ENCODE measurements at regions of chr19 and their contacts with region 1.

Region 1: DNA sequence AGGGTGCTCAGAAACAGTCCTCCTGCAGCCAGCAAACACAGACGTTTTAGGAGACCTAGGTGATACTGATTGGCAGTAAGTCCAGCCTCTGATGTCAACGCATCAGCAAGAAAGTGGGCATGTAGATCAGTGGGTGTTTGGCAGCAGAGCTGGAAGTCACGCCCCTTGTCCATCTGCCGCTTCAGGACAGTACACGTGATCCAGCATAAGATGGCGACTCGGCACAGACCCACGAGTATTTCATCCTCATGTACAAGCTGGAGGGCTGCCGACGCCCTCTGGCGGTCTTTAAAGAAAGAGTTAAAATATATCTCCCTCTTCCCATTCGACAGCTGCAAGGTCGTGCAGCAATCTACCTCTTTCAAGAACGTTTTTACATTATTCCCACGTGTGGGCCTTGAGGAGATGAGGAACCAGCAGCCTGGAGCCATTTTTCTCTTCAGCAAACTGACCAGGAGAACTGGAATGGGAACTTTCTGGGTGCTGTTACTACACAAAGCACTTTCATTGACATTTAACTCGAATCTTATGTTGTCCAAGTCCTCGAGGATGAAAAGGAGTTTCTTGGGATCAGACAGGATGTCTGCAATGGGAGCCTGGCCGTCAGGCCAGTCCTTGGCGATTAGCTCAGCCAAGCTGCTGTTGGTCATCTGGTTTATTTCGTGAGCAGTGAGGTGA is 22.3 kb downstream of the NLRP11 start:
- DNase-seq: peak; percentile 68 to 81 (median 79)
- ATAC-seq: peak; percentile 97 to 99 (median 98)
- H3K4me3 ChIP-seq: peak overlapping the region in 2 of 3 donors; percentile 17 to 18
- H3K27ac ChIP-seq: no peak overlapping the region
- H3K4me1 ChIP-seq: peaks cover 0 to 8% (median 0%) of the 10 kb centered on the region in 4 donors
- H3K27me3 ChIP-seq: no peaks in the 10 kb centered on the region
- CTCF ChIP-seq: peak; percentile 66 to 73 (median 68)
- POLR2A ChIP-seq: no peak

Region 2: GRCh38 chr19:55638864-55639359 is 170.6 kb before region 1 on chr19:
- intact Hi-C with region 1: loop called in 1 of 2 experiments (anchors 5 kb)
- DNase-seq: no peak
- ATAC-seq: no peak
- H3K4me3 ChIP-seq: no peak overlapping the region
- H3K27ac ChIP-seq: no peak overlapping the region
- H3K4me1 ChIP-seq: peaks cover 0 to 47% (median 20%) of the 10 kb centered on the region in 4 donors
- H3K27me3 ChIP-seq: no peaks in the 10 kb centered on the region
- CTCF ChIP-seq: peak; percentile 10 to 30 (median 18)
- POLR2A ChIP-seq: no peak

Region 3: DNA sequence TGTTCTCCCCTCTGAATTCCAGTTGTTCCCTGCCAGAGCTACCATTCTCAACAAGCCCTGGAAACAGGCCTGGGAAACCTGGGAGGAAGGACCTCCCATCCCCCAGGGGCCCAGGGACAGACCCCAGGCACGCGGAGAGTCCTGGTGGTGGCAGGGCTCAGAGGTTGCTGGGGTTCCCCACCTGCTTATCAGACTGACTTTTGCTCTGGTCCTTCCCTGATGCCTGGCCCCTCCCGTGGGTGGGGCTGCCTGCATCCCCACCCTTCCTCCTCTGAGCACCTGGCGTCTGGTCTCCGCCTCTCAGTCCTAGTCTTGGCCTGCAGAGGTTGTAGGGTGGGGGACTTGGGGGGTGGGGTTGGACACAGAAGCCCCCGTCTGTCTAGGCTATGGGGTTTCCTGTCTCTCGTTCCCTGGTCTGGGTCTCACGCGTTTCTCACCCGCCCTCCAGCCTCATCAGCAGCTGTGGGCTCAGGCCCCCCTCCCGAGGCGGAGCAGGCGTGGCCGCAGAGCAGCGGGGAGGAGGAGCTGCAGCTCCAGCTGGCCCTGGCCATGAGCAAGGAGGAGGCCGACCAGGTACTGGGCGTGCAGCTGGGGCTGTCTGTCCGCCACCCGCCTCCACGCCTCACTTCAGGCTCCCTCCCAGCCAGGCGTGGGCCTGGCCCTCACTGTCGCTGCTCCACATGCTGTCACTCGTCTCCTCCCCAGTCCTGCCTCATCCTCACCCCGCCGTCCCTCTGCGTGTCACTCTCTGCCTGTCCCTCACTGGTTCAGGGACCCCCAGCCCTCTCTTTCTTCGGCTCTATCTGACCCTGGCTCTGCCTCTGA is 120.9 kb before region 1 on chr19:
- intact Hi-C with region 1: loop called in 1 of 2 experiments (anchors 10 kb)
- DNase-seq: peak in 2 of 3 donors; percentile 16 to 18
- ATAC-seq: no peak
- H3K4me3 ChIP-seq: no peak overlapping the region
- H3K27ac ChIP-seq: no peak overlapping the region
- H3K4me1 ChIP-seq: peaks cover 0 to 17% (median 5%) of the 10 kb centered on the region in 4 donors
- H3K27me3 ChIP-seq: no peaks in the 10 kb centered on the region
- CTCF ChIP-seq: no peak
- POLR2A ChIP-seq: no peak

Measured in right lobe of liver (tissue), 6 donors.